ENCODE measurements at regions of chr2 and their contacts with region 1.

Region 1: GRCh38 chr2:121529439-121530211 is 1.1 kb upstream of the RNU4ATAC start:
- DNase-seq: peak; percentile 83
- ATAC-seq: peak; percentile 54

Region 2: GRCh38 chr2:121076885-121077549 is 452.6 kb before region 1 on chr2:
- intact Hi-C with region 1: no loop called
- DNase-seq: peak; percentile 77
- ATAC-seq: peak; percentile 45

Region 3: DNA sequence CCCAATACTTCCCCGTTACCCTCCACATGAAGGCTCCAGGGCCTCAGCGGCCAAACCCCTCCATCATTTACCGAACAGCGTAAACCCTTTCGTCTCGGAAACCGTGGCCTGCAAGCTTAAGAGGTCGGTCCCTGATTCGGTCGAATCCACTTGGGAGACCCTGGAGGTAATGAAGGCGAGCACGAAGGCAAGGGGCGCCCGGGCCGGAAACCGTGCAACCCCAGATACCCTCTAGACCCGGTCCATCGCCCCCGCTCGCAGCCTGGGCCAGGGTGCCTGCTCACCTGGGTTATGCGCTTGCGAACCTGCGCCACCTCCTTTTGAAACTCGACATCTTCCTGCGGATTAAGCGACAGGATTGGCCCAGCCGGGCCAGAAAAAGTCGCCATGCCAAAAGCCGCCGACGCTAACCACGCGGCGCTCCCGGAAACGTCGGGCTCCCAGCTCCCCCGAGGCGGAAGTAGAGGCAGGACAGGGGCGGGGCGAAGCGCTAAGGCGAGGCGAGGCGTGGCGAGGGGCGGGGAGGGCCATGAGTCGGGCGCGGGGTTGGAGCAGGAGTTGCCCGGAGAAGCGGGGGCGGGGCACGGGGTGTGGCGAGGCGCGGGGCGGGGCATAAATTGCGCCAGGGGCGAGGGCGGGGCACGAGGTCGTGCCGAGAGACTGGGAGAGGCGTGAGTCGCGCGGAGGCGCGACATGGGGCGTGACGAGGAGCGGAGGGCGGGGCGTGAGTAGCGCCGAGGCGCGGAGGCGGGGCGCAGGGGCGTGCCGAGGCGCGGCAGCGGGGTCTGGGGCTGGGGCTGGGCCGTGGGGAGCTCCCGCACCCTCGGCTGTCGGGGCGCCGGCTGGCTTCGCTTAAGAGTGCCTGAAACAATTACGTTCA is 207.1 kb after region 1 on chr2 and contains the start of gene NIFK:
- intact Hi-C with region 1: loop called (anchors 10 kb)
- DNase-seq: peak; percentile 100
- ATAC-seq: peak; percentile 99
- total RNA-seq, gene NIFK: 35.7 TPM

Measured in sciatic nerve (tissue), 2 donors.